Adrenal gland (tissue), 19 donors: ENCODE measurements at regions of chr2 and their contacts with region 1.

Region 1: GRCh38 chr2:216404010-216404618 is 8.2 kb upstream of the SMARCAL1 start:
- DNase-seq: peak in 6 of 7 donors; percentile 35 to 77 (median 52)
- H3K4me3 ChIP-seq: no peak overlapping the region
- H3K27ac ChIP-seq: no peak overlapping the region
- H3K4me1 ChIP-seq: no peaks in the 10 kb centered on the region
- H3K27me3 ChIP-seq: no peaks in the 10 kb centered on the region
- CTCF ChIP-seq: peak; percentile 60 to 87 (median 84)
- POLR2A ChIP-seq: no peak

Region 2: GRCh38 chr2:216114714-216115557 is 289.2 kb before region 1 on chr2:
- intact Hi-C with region 1: loop called in 1 of 2 experiments (anchors 10 kb)
- DNase-seq: peak; percentile 98 to 100 (median 99)
- H3K4me3 ChIP-seq: peak overlapping the region in 2 of 4 donors; percentile 34 to 67
- H3K27ac ChIP-seq: peak overlapping the region in 4 of 5 donors; percentile 63 to 83 (median 72)
- H3K4me1 ChIP-seq: peaks cover 20 to 47% of the 10 kb centered on the region in 2 donors
- H3K27me3 ChIP-seq: no peaks in the 10 kb centered on the region
- CTCF ChIP-seq: peak; percentile 81 to 93 (median 88)
- POLR2A ChIP-seq: peak; percentile 14 to 83

Region 3: DNA sequence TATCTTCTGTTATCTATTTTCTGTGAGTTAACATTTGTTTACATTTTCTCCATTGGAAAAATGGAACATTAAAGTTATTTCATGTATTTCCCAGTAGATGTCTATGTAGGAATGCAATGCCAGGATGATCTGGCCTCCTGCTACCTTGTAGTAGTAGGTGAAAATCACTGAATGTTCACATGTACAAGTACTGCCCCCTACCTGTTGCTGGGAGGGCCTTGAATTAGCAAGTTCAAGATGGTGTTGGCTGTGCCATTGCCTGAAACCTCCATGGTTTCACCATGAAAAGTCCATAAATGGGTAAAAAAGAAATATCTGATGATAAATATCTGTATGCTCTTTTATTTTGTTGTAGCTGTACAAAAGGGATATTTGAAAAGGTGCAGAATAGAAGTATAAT is 264.2 kb before region 1 on chr2:
- intact Hi-C with region 1: loop called in 1 of 2 experiments (anchors 10 kb)
- DNase-seq: peak in 1 of 7 donors; percentile 32
- H3K4me3 ChIP-seq: no peak overlapping the region
- H3K27ac ChIP-seq: no peak overlapping the region
- H3K4me1 ChIP-seq: no peaks in the 10 kb centered on the region
- H3K27me3 ChIP-seq: no peaks in the 10 kb centered on the region
- CTCF ChIP-seq: peak in 2 of 6 experiments; percentile 13 to 21
- POLR2A ChIP-seq: no peak